IMR-90 (cell line): ENCODE measurements at regions of chr15 and their contacts with region 1.

Region 1: GRCh38 chr15:63093486-63094205 is 28.0 kb upstream of the LACTB start:
- DNase-seq: peak; percentile 80
- ATAC-seq: peak; percentile 59
- H3K4me3 ChIP-seq: no peak overlapping the region
- H3K27ac ChIP-seq: peak overlapping the region; percentile 4
- H3K4me1 ChIP-seq: peaks cover 12% of the 10 kb centered on the region
- H3K27me3 ChIP-seq: no peaks in the 10 kb centered on the region
- CTCF ChIP-seq: peak; percentile 82
- POLR2A ChIP-seq: peak; percentile 40; the same call in 1 of the 2 replicates
- RAD21 ChIP-seq: peak; percentile 95

Region 2: GRCh38 chr15:62658498-62658897 is 435.1 kb before region 1 on chr15:
- CTCF ChIA-PET with region 1: no interaction called
- POLR2A ChIA-PET with region 1: no interaction called
- dilution Hi-C with region 1: no loop called
- in situ Hi-C with region 1: no loop called
- intact Hi-C with region 1: no loop called
- DNase-seq: no peak
- ATAC-seq: no peak
- H3K4me3 ChIP-seq: no peak overlapping the region
- H3K27ac ChIP-seq: no peak overlapping the region
- H3K4me1 ChIP-seq: no peaks in the 10 kb centered on the region
- H3K27me3 ChIP-seq: no peaks in the 10 kb centered on the region
- CTCF ChIP-seq: no peak
- POLR2A ChIP-seq: no peak
- RAD21 ChIP-seq: no peak

Region 3: DNA sequence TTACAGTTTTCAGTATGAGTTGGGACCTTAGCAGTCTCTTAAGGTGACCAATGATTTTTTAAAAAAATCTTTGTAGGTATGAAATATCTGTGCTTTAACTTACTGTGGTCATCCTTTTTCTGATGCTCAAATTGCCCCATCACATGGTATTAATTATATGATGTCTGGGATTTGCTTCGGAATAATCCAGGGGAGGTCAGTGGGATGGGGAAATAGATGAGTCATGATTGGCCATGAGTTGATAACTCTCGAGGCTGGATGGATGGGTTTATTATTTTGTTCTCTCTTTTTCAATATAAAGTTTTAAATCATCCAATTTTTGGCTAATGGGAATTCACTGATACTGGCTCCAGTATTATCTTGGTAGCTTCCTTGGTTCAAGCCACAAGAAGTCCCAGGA is 421.4 kb before region 1 on chr15:
- CTCF ChIA-PET with region 1: no interaction called
- POLR2A ChIA-PET with region 1: no interaction called
- dilution Hi-C with region 1: no loop called
- in situ Hi-C with region 1: no loop called
- intact Hi-C with region 1: no loop called
- DNase-seq: peak; percentile 15
- ATAC-seq: no peak
- H3K4me3 ChIP-seq: no peak overlapping the region
- H3K27ac ChIP-seq: no peak overlapping the region
- H3K4me1 ChIP-seq: no peaks in the 10 kb centered on the region
- H3K27me3 ChIP-seq: no peaks in the 10 kb centered on the region
- CTCF ChIP-seq: no peak
- POLR2A ChIP-seq: no peak
- RAD21 ChIP-seq: no peak

Region 4: DNA sequence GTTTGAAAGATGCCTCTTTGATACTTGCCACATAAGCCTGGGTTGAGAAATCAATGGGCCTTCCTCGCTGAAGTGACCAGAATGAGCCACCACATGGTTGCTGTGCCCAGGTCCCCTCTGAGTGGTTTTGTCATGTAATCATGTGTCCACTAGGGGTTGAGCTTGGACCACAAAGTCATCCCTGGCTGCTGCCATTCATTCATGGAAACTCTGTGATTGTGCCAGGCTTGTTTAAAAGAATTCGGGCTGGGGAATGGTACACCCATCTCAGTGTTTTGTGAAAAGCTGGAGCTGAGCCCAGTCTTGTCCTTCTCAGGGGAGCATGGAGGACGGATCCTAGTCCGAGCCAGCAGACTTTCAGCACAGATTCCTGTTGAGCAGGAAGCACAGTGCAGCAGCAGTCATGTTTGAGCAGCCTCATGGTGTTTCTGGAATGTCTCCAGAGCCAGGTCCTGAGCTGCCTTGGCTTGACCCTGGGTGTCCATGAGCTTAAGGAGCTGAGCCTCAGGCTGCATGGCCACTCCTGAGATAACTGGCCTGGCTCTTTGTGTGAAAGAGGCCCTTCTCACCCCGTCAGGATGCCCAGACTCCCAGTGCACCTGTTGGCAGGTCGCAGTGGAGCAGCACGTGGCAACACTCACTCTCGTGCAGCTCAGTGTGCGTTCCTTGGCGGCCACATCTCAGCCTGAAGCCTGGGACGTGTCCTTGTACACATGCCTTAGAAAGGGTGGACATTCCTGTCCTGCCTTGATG is 311.4 kb before region 1 on chr15:
- CTCF ChIA-PET with region 1: interaction called, 9 read pairs
- POLR2A ChIA-PET with region 1: no interaction called
- dilution Hi-C with region 1: no loop called
- in situ Hi-C with region 1: no loop called
- intact Hi-C with region 1: loop called (anchors 1 kb)
- DNase-seq: peak; percentile 85
- ATAC-seq: peak; percentile 81
- H3K4me3 ChIP-seq: no peak overlapping the region
- H3K27ac ChIP-seq: peak overlapping the region; percentile 0; the same call in 1 of the 2 replicates
- H3K4me1 ChIP-seq: peaks cover 20% of the 10 kb centered on the region
- H3K27me3 ChIP-seq: no peaks in the 10 kb centered on the region
- CTCF ChIP-seq: peak; percentile 84
- POLR2A ChIP-seq: 0 out of 2 replicates have a peak, but pooled peaks have one; percentile 37
- RAD21 ChIP-seq: peak; percentile 96

Region 5: GRCh38 chr15:63048115-63048775 is 45.4 kb before region 1 on chr15:
- CTCF ChIA-PET with region 1: interaction called, 16 read pairs
- POLR2A ChIA-PET with region 1: interaction called, 6 read pairs
- dilution Hi-C with region 1: no loop called
- in situ Hi-C with region 1: no loop called
- intact Hi-C with region 1: loop called (anchors 1 kb)
- DNase-seq: peak; percentile 92
- ATAC-seq: peak; percentile 60
- H3K4me3 ChIP-seq: peak overlapping the region; percentile 84
- H3K27ac ChIP-seq: peak overlapping the region; percentile 92
- H3K4me1 ChIP-seq: peaks cover 22% of the 10 kb centered on the region
- H3K27me3 ChIP-seq: no peaks in the 10 kb centered on the region
- CTCF ChIP-seq: peak; percentile 82
- POLR2A ChIP-seq: peak; percentile 79
- RAD21 ChIP-seq: peak; percentile 80

Region 6: GRCh38 chr15:63107895-63108546 is 14.4 kb after region 1 on chr15:
- CTCF ChIA-PET with region 1: interaction called, 7 read pairs
- POLR2A ChIA-PET with region 1: no interaction called
- dilution Hi-C with region 1: no loop called
- in situ Hi-C with region 1: no loop called
- intact Hi-C with region 1: loop called (anchors 1 kb)
- DNase-seq: peak; percentile 100
- ATAC-seq: peak; percentile 92
- H3K4me3 ChIP-seq: no peak overlapping the region
- H3K27ac ChIP-seq: no peak overlapping the region
- H3K4me1 ChIP-seq: peaks cover 13% of the 10 kb centered on the region
- H3K27me3 ChIP-seq: no peaks in the 10 kb centered on the region
- CTCF ChIP-seq: no peak
- POLR2A ChIP-seq: no peak; the same call in 1 of the 2 replicates
- RAD21 ChIP-seq: peak; percentile 26; the same call in 1 of the 2 replicates

Region 7: DNA sequence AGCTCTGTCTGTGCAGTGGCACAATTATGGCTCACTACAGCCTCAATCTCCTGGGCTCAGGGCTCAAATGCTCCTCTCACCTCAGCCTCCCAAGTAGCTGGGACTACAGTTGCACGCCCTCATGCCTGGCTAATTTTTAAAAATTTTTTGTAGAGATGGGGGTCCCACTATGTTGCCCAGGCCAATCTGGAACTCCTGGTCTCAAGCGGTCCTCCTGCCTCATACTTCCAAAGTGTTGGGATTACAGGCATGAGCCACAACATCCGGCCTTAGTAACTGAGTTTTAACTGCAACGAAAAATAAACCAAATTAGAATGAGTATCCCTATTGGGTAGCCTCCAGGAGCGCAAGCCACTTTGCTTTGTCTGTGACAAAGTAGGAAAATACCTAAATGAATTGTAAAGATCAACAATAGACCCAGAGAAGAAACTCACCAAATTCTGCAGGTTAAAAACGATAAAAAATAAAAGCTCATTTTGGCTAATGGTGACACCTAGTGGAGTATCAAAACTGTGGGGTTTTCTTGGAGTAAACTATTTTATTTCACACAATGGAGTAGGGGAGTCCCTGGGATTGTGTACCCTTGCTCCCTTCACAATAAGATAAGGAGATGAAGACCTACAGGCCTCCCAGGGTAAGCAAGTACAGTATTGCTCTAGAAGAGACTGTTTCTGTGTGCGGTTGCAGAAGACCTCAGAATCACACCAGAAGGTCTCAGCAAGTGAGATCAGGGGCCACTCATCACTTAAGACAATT is 309.0 kb after region 1 on chr15:
- CTCF ChIA-PET with region 1: no interaction called
- POLR2A ChIA-PET with region 1: no interaction called
- dilution Hi-C with region 1: no loop called
- in situ Hi-C with region 1: no loop called
- intact Hi-C with region 1: loop called (anchors 10 kb)
- DNase-seq: peak; percentile 57
- ATAC-seq: peak; percentile 76
- H3K4me3 ChIP-seq: no peak overlapping the region
- H3K27ac ChIP-seq: no peak overlapping the region
- H3K4me1 ChIP-seq: peaks cover 7% of the 10 kb centered on the region; the same call in 1 of the 2 replicates
- H3K27me3 ChIP-seq: no peaks in the 10 kb centered on the region
- CTCF ChIP-seq: peak; percentile 77
- POLR2A ChIP-seq: no peak
- RAD21 ChIP-seq: peak; percentile 79